Dendritic cell treated with granulocyte-macrophage colony-stimulating factor and Interleukin-4, amounts not matched to agents 40 ng/mL and 50 ng/mL, for 4 days (primary cell): ENCODE measurements at regions of chr6 and their contacts with region 1.

Region 1: DNA sequence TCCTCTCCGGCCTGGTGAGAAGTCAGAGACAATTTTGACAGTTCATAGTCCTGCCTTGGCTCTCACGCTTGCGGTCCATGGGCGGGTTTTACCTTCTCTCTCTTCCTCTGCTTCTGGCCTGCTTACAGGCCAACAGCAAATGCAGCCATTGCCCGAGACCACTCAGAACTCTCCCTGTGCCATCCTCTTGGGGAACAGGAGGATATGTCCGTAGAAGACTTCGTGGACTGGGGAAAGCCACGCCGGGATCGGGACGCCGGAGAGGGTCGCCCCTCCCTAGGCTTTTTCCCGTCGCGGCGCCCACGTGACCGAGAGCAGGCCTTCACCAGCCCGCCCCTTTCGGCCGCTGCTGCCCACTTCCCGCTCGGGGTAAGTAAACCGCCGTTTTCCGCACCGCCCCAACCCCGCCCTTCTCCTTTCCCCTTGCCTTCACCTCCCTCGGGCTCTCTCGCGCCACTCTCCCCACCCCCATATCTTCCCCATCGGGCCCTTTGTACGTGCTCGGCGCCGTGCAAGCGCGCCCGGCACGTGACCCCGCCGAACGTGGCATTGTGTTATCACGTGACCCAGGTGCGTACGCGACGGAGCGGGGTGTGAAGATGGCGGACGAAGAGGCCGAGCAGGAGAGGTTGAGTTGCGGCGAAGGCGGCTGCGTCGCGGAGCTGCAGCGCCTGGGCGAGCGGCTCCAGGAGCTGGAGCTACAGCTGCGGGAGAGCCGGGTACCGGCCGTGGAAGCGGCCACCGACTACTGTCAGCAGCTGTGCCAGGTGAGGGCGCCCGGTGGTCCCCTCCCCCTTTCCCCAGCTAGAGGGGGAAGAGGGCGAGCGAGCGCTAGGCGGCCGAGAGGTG is at the start of gene ZNF292:
- H3K4me3 Mint-ChIP-seq: peak within 1 kb of the TSS; percentile 98
- H3K27ac Mint-ChIP-seq: peak within 1 kb of the TSS; percentile 97
- H3K4me1 Mint-ChIP-seq: peaks cover 42% of the 10 kb centered on the region
- H3K27me3 Mint-ChIP-seq: peaks cover 13% of the 10 kb centered on the region

Region 2: DNA sequence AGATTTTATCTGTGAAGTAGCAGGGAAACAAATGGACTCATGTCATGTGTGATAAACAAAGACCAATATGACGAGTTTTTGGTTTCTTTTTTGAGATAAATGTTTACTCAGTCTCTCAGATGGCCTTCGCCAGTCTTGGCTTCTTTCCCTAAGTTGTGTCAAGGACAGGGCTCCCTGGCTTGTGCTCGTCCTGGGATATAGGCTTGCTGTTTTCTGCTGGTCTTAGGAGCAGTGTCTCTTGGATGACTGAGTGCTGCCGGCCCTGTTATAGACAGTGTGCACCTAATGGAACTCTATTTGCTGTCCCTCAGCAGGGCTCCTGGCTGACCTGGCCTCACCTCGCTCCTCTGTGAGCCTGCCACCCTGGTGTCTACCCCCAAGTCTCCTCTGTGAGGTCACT is 1188.4 kb before region 1 on chr6:
- intact Hi-C with region 1: no loop called
- H3K4me3 Mint-ChIP-seq: no peak overlapping the region
- H3K27ac Mint-ChIP-seq: no peak overlapping the region
- H3K4me1 Mint-ChIP-seq: no peaks in the 10 kb centered on the region
- H3K27me3 Mint-ChIP-seq: no peaks in the 10 kb centered on the region

Region 3: DNA sequence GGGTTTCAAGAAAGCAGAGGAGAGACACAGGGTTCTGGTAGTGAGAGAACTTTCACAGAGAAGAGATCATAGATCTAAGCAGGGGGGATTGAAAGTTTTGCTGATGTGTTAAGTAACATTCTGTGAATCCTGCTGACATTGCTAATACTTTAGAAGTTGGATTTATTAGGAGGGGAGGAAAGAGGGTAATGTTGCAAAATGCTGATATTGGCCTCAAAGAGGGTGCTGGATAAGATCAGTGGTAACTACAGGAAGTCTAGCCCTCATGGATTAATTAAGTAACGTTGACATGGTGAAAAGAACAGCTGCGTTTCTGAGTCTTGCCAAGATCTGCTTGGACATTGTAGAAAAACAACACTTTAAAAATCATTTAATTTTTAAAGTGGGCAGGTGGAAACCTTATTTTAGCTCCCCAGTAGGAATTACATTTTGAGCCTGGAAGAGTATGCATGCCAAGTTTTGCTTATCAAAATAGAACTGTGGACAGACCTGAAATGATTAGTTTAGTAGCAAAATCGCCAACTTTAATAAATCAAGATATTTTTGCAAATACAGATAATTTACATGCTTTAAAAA is 823.9 kb before region 1 on chr6:
- intact Hi-C with region 1: no loop called
- H3K4me3 Mint-ChIP-seq: no peak overlapping the region
- H3K27ac Mint-ChIP-seq: no peak overlapping the region
- H3K4me1 Mint-ChIP-seq: no peaks in the 10 kb centered on the region
- H3K27me3 Mint-ChIP-seq: no peaks in the 10 kb centered on the region

Region 4: DNA sequence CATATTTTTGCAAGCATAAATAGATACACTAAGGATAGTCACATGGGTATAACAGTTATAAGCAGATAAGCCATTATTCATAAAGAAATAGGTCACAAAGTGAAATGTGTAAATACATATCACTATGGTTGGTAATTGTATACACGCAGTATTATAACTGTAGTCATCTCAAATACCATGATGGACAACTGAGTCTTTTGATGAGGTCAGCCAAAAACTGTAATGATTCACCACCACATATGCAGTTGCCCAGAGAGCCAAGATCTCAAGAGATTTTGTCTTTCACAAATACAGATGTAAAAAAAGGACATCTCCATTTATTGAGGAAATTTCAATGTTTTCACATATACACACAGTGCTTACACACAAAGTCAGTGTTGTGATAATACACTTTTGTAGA is 28.5 kb after region 1 on chr6:
- intact Hi-C with region 1: no loop called
- H3K4me3 Mint-ChIP-seq: no peak overlapping the region
- H3K27ac Mint-ChIP-seq: no peak overlapping the region
- H3K4me1 Mint-ChIP-seq: peaks cover 22% of the 10 kb centered on the region
- H3K27me3 Mint-ChIP-seq: no peaks in the 10 kb centered on the region

Region 5: GRCh38 chr6:87407901-87408720 is 252.9 kb after region 1 on chr6 and contains the start of gene CFAP206:
- intact Hi-C with region 1: loop called (anchors 5 kb)
- H3K4me3 Mint-ChIP-seq: peak within 1 kb of the TSS; percentile 87
- H3K27ac Mint-ChIP-seq: peak within 1 kb of the TSS; percentile 76
- H3K4me1 Mint-ChIP-seq: no peaks in the 10 kb centered on the region
- H3K27me3 Mint-ChIP-seq: peaks cover 11% of the 10 kb centered on the region

Region 6: DNA sequence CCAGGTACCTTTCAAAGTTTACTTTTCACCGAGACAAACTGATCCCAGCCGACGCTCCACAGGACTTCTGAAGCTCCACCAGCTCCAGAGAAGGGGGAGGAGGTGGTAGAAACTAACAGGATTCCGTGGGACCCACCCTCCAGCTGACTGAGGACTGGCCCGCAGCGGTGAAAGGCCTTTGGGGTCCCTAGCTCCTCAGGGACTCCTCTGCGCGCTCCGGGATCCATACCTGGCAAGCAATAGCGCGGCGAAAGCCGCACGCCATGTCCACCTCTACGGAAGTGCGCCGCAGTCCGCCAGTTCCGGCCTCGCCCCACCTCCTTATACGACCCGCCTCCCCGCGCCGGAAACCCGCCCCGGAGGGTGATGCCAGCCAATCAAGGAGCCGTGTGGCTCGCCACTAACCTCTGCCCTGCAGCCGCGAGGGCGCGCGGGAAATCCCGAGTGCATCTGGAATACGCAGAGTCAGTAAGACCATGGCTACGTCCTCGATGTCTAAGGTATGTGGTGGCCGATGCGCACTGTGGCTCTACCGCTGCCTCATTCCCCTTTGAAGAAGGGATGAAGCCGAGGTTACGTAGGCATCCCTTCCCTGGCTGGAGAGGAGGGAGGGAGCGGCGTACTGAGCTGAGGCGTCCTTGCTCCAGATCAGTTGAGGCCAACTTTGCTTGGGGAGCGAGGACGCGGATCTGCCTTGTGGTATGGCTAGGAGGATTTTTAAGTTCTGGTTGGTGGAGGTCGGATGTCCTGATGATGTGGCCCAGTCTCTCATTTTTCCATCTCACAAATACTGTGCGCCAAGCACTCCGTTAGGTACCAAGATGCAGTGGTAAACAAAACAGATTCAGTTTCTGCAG is 434.7 kb after region 1 on chr6 and contains the starts of genes ORC3 and RARS2:
- intact Hi-C with region 1: loop called (anchors 10 kb)
- H3K4me3 Mint-ChIP-seq: peak within 1 kb of the TSS; percentile 86
- H3K27ac Mint-ChIP-seq: peak within 1 kb of the TSS; percentile 90
- H3K4me1 Mint-ChIP-seq: peaks cover 37% of the 10 kb centered on the region
- H3K27me3 Mint-ChIP-seq: no peaks in the 10 kb centered on the region

Region 7: GRCh38 chr6:88105741-88106340 is 950.6 kb after region 1 on chr6:
- intact Hi-C with region 1: no loop called
- H3K4me3 Mint-ChIP-seq: no peak overlapping the region
- H3K27ac Mint-ChIP-seq: no peak overlapping the region
- H3K4me1 Mint-ChIP-seq: no peaks in the 10 kb centered on the region
- H3K27me3 Mint-ChIP-seq: no peaks in the 10 kb centered on the region